HCT116 (cell line): ENCODE measurements at regions of chr6 and their contacts with region 1.

Region 1: DNA sequence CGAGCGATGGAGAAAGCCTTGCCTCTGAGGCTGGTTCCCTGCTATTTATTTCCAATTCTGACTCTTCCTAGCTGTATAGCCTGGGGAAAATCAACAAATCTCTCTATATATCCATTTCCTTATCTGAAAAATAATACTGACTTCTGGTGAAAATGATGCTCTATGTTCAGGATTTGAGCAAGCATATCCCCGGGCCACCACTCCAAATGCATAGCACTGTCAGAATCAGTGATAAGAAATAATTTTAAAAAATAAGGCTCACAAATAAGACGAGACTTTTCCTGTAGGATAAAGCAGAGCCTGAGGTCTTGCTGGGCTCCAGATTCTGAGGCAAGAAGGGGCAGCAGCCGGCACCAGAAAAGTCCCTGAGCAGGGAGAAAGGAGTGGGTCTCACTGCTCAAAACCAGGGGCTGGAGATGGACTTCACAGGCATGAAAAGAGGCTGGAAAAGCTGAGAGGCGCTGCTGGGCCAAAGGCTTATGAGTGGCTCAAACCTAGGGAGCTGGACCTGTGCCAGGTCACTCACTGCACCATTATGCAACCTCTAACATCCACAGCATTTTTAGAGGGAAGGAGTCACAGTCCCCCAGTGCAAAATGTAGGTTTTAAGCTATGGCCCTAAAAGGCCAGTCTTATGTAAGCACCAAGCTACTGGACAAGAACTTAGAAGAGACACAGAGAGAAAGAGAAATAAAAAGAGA is 48.1 kb upstream of the SLC17A4 start:
- DNase-seq: no peak
- ATAC-seq: no peak
- H3K4me3 ChIP-seq: no peak overlapping the region
- H3K27ac ChIP-seq: no peak overlapping the region
- H3K4me1 ChIP-seq: no peaks in the 10 kb centered on the region
- H3K27me3 ChIP-seq: no peaks in the 10 kb centered on the region
- CTCF ChIP-seq: no peak
- POLR2A ChIP-seq: no peak
- RAD21 ChIP-seq: no peak

Region 2: GRCh38 chr6:24774696-24775519 is 931.6 kb before region 1 on chr6 and contains the start of gene GMNN:
- CTCF ChIA-PET with region 1: no interaction called
- POLR2A ChIA-PET with region 1: no interaction called
- RAD21 ChIA-PET with region 1: no interaction called
- intact Hi-C with region 1: no loop called
- DNase-seq: peak; percentile 81
- ATAC-seq: peak; percentile 94
- H3K4me3 ChIP-seq: peak within 1 kb of the TSS; percentile 80 to 98
- H3K27ac ChIP-seq: peak within 1 kb of the TSS; percentile 93
- H3K4me1 ChIP-seq: peaks cover 6 to 19% of the 10 kb centered on the region in 2 experiments; a peak in 3 of 4 replicates
- H3K27me3 ChIP-seq: no peaks in the 10 kb centered on the region
- CTCF ChIP-seq: no peak
- POLR2A ChIP-seq: peak; percentile 91
- RAD21 ChIP-seq: no peak
- total RNA-seq, gene GMNN: 54.9 TPM

Region 3: GRCh38 chr6:25726122-25726911 is 19.9 kb after region 1 on chr6:
- CTCF ChIA-PET with region 1: interaction called, 3 read pairs
- POLR2A ChIA-PET with region 1: no interaction called
- RAD21 ChIA-PET with region 1: no interaction called
- intact Hi-C with region 1: loop called (anchors 1 kb)
- DNase-seq: no peak
- ATAC-seq: no peak
- H3K4me3 ChIP-seq: no peak overlapping the region
- H3K27ac ChIP-seq: no peak overlapping the region
- H3K4me1 ChIP-seq: no peaks in the 10 kb centered on the region
- H3K27me3 ChIP-seq: no peaks in the 10 kb centered on the region
- CTCF ChIP-seq: no peak
- POLR2A ChIP-seq: no peak
- RAD21 ChIP-seq: no peak

Region 4: DNA sequence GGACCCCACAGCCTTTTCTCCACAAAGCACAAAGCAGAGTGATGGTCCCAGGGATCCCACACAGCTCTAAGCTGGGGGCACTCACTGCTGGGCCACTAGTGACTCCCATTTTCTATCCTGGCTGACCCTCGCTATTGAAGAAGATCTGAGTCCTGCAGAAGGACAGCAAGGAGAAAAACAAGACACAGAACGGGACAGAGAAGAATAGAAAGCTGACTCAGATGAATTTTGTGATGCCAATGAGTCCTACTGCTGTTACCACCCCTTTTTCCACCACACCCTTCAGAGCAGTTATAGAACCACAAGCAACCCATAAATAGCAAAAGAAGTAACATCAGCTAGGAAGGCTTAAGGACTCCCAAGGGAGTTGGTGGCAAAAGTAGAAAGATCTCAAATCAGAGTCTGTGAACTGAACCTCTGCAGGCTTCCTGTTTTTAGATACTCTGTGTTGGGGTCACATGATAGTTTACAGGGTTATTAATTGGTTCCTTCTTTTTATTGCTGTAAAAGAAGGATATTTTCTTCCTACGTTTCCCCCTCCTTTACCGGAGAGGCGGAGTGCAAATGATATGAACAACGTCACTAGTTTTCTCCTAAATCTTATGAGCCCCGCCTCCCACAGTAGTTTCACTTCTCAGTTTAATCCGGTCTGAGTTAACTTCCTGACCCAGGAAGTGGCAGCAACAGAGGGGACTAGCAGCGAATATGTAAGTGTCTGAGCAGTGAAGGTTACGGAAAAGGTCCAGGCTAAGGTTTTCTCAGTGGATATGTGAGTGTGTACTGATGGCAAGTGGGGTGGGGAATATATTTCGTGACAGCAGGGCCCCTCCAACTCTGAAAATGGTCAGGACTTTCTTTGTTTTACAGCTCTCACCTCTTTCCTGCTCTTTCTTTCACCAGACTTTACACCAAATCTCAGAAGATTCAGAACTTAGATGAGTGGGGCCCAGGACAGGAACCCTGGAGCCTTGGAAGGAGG is 256.0 kb after region 1 on chr6 and contains the start of gene TRIM38:
- CTCF ChIA-PET with region 1: no interaction called
- POLR2A ChIA-PET with region 1: no interaction called
- RAD21 ChIA-PET with region 1: no interaction called
- intact Hi-C with region 1: no loop called
- DNase-seq: peak; percentile 54
- ATAC-seq: peak; percentile 76
- H3K4me3 ChIP-seq: peak within 1 kb of the TSS; percentile 62 to 63
- H3K27ac ChIP-seq: peak within 1 kb of the TSS; percentile 57
- H3K4me1 ChIP-seq: peaks cover 18 to 29% of the 10 kb centered on the region in 2 experiments
- H3K27me3 ChIP-seq: no peaks in the 10 kb centered on the region
- CTCF ChIP-seq: no peak
- POLR2A ChIP-seq: no peak
- RAD21 ChIP-seq: no peak
- total RNA-seq, gene TRIM38: 9.6 TPM

Region 5: GRCh38 chr6:26157977-26158648 is 451.6 kb after region 1 on chr6:
- CTCF ChIA-PET with region 1: no interaction called
- POLR2A ChIA-PET with region 1: no interaction called
- RAD21 ChIA-PET with region 1: no interaction called
- intact Hi-C with region 1: no loop called
- DNase-seq: peak; percentile 99
- ATAC-seq: peak; percentile 52
- H3K4me3 ChIP-seq: peak overlapping the region; percentile 66 to 69
- H3K27ac ChIP-seq: peak overlapping the region; percentile 88
- H3K4me1 ChIP-seq: peaks cover 24 to 61% of the 10 kb centered on the region in 2 experiments
- H3K27me3 ChIP-seq: no peaks in the 10 kb centered on the region
- CTCF ChIP-seq: no peak
- POLR2A ChIP-seq: peak; percentile 96
- RAD21 ChIP-seq: peak; percentile 19; the same call in 1 of the 2 replicates